ENCODE measurements at regions of chr2 and their contacts with region 1.

Region 1: DNA sequence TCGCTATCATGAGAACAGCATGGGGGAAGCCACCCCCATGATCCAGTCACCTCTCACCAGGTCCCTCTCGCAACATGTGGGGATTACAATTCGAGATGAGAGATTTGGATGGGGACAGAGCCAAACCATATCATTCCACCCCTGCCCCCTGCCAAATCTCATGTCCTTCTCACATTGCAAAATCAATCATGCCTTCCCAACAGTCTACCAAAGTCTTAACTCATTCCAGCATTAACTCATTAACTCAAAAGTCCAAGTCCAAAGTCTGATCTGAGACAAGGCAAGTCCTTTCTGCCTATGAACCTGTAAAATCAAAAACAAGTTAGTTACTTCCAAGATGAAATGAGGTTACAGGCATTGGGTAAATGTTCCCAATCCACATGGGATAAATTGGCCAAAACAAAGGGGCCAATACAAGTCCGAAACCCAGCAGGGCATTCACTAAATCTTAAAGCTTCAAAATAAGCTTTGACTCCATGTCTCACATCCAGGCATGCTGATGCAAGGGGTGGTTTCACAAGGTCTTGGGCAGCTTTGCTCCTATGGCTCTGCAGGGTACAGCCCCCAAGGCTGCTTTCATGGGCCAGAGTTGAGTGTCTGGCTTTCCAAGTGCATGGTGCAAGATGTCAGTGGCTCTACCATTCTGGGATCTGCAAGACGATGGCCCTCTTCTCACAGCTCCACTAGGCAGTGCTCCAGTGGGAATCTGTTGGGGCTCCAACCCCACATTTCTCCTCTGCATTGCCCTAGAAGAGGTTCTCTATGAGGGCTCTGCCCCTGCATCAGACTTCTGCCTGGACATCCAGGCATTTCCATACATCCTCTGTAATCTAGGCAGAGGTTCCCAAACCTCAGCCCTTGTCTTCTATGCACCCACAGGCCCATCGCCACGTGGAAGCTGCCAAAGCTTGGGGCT is 14.8 kb downstream of the TAF1B start:
- DNase-seq: no peak
- H3K4me3 ChIP-seq: no peak overlapping the region
- H3K27ac ChIP-seq: no peak overlapping the region
- H3K4me1 ChIP-seq: no peaks in the 10 kb centered on the region
- H3K27me3 ChIP-seq: no peaks in the 10 kb centered on the region
- CTCF ChIP-seq: no peak

Region 2: GRCh38 chr2:9895669-9896595 is 37.9 kb after region 1 on chr2:
- CTCF ChIA-PET with region 1: no interaction called
- POLR2A ChIA-PET with region 1: no interaction called
- intact Hi-C with region 1: loop called (anchors 2 kb)
- DNase-seq: no peak
- H3K4me3 ChIP-seq: no peak overlapping the region
- H3K27ac ChIP-seq: peak overlapping the region; percentile 69
- H3K4me1 ChIP-seq: peaks cover 35% of the 10 kb centered on the region
- H3K27me3 ChIP-seq: no peaks in the 10 kb centered on the region
- CTCF ChIP-seq: no peak

Region 3: DNA sequence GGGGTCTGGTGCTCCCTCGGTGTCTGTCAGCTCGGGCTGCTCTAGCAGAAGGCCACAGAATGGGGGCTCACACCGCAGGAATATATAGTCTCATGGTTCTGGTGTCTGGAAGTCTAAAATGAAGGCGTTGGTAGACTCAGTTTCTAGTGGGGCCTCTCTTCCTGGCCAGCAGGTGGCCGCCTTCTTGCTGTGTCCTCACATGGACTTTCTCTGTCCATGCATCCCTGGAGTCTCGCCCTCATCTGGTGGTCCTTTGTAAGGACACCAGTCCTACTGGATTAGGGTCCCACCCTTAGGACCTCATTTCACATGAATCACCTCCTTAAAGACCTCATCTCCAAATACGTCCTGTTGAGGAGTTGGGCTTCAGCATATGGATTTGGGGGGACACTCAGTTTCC is 330.1 kb after region 1 on chr2:
- CTCF ChIA-PET with region 1: no interaction called
- POLR2A ChIA-PET with region 1: no interaction called
- intact Hi-C with region 1: no loop called
- DNase-seq: peak; percentile 28
- H3K4me3 ChIP-seq: no peak overlapping the region
- H3K27ac ChIP-seq: no peak overlapping the region
- H3K4me1 ChIP-seq: no peaks in the 10 kb centered on the region
- H3K27me3 ChIP-seq: no peaks in the 10 kb centered on the region
- CTCF ChIP-seq: peak; percentile 30; the same call in 1 of the 2 replicates